PC-3 (cell line): ENCODE measurements at regions of chr1 and their contacts with region 1.

Region 1: DNA sequence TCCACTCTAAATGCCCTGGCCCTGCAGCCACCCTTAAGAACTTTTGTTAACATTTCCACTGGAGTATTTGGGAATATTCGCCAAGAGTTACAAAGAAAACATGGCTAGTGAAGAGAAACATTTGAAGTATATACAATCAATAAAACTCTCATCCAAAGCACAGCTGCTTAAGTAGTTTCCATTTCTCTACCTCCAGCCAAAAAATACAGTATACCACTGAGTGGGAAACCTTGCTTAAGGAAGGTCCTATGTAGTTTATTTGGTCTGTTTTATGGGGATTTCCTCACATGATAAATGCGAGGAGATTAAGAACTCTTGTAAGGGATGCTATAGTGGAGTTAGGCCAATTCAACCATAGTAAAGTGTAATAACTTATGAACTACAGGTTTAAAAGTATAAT is 382.5 kb downstream of the NEGR1 start:
- DNase-seq: no peak
- ATAC-seq: no peak
- H3K4me3 ChIP-seq: no peak overlapping the region
- H3K27ac ChIP-seq: no peak overlapping the region
- H3K4me1 ChIP-seq: no peaks in the 10 kb centered on the region
- H3K27me3 ChIP-seq: no peaks in the 10 kb centered on the region
- CTCF ChIP-seq: no peak

Region 2: DNA sequence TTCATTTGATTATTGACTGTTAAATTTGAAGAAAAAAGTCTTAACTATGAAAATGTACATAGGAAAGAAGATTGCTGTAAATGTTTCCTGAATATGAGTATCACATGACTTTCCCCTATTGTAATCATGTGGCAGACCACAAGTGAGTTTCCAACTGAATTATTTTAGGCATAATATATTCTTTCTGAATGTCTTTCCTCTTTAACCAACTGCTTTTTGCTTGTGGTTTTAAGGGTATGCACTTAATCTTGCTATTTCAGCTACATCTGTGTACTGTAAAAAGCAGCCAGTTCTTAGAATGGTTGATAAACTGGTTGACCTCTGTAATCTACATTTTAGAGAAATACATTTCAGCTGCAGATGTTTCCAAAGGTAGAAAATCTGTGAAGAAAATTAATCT is 18.3 kb before region 1 on chr1:
- CTCF ChIA-PET with region 1: no interaction called
- POLR2A ChIA-PET with region 1: no interaction called
- intact Hi-C with region 1: loop called (anchors 2 kb)
- DNase-seq: no peak
- ATAC-seq: no peak
- H3K4me3 ChIP-seq: no peak overlapping the region
- H3K27ac ChIP-seq: no peak overlapping the region
- H3K4me1 ChIP-seq: no peaks in the 10 kb centered on the region
- H3K27me3 ChIP-seq: no peaks in the 10 kb centered on the region
- CTCF ChIP-seq: no peak